ENCODE measurements at regions of chr6 and their contacts with region 1.

Region 1: GRCh38 chr6:106187424-106187982 is 101.4 kb downstream of the PRDM1 start:
- DNase-seq: no peak
- H3K4me3 Mint-ChIP-seq: peak overlapping the region; percentile 48
- H3K27ac Mint-ChIP-seq: peak overlapping the region; percentile 86
- H3K4me1 Mint-ChIP-seq: peaks cover 68% of the 10 kb centered on the region
- H3K27me3 Mint-ChIP-seq: no peaks in the 10 kb centered on the region

Region 2: DNA sequence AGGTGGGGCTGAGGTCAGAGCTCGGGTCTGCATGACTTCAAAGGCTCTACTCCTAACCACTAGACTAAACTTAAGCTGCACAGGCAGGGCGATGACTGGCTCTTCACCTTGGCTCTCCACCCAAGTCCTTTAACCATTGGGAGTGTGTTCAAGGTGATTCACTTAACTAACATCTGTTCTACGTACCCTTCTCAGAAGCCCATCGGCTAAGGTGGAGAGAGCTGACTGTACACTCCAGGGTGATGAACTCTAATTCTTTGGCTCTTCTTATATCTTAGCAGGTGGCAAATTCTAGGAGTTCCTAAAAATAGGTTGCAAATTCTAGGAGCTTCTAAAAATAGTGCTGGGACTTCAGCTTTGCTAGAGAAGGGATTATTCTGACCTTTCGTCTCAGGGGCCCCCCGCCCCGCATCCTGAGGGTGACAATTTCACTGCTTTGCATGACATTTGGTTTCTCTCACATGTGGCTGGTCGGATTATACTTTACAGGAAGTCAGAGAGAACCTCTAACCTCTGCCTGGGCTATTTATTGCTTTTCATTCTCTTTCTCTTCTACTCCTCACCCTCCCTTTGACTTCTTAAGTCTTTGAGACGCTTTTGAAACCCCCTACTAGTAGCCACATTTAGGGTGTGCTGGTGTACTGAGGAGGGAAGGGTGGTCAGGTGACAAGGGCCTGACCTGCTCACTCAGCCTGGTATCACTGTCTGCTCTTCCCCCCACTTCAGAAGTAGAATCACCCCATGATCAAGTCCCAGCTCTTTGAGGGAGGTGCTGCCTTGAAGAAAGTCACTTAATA is 45.9 kb before region 1 on chr6:
- intact Hi-C with region 1: loop called (anchors 1 kb)
- DNase-seq: peak; percentile 35
- H3K4me3 Mint-ChIP-seq: peak overlapping the region; percentile 55
- H3K27ac Mint-ChIP-seq: peak overlapping the region; percentile 98
- H3K4me1 Mint-ChIP-seq: peaks cover 63% of the 10 kb centered on the region
- H3K27me3 Mint-ChIP-seq: no peaks in the 10 kb centered on the region

Measured in activated T-helper 2 cell treated with anti-CD3 and anti-CD28 coated beads, Interferon-gamma antibody, Interleukin-2, Interleukin-4, amounts not matched to agents 10 μg/mL and 5 μg/mL and 100 μg/mL, durations not matched to agents 14 hours and 24 hours and 36 hours (primary cell).